A549 (cell line): ENCODE measurements at regions of chr3 and their contacts with region 1.

Region 1: DNA sequence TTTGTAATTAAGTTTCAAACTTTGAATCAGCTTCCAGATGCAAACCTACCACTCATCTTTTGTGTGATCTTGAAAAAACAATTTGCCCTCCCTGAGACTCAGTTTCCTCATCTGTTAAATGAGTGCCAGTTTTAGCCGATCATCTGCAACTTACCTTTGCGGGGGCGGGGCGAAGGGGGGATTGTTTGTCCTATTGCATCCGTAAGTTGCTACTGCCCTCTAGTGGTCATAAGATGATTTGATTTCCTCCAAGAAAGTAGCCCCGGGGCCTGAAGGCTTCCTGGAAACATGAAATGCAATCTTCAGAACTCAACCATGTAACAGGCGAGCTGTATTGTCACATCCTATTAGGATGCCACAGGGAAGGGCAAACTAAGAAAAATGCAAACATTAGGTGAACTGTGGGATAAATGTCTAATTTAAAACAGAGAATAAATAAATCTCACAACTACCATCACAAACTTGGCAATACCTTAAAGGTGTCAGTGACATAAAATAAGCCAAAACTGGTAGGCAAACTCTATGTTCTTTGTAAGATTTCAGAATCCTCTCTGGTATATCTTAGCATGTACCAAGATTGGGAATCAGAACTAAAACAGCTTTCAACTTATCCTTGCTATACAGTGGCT is 63.5 kb upstream of the CLDN18 start:
- DNase-seq: peak; percentile 33 to 70
- ATAC-seq: peak; percentile 64 to 77; a peak in 5 of 6 replicates
- H3K4me3 ChIP-seq: no peak overlapping the region
- H3K27ac ChIP-seq: no peak overlapping the region
- H3K4me1 ChIP-seq: no peaks in the 10 kb centered on the region
- CTCF ChIP-seq: peak; percentile 69
- EP300 ChIP-seq: no peak
- POLR2A ChIP-seq: no peak
- RAD21 ChIP-seq: peak; percentile 74 to 79

Region 2: GRCh38 chr3:137032465-137033120 is 913.9 kb before region 1 on chr3:
- CTCF ChIA-PET with region 1: interaction called, 10 read pairs
- POLR2A ChIA-PET with region 1: no interaction called
- DNase-seq: peak; percentile 68 to 76
- ATAC-seq: peak; percentile 91 to 95
- H3K4me3 ChIP-seq: peak overlapping the region; percentile 3; the same call in 2 of the 3 replicates
- H3K27ac ChIP-seq: no peak overlapping the region
- H3K4me1 ChIP-seq: no peaks in the 10 kb centered on the region
- CTCF ChIP-seq: peak; percentile 68
- EP300 ChIP-seq: no peak
- POLR2A ChIP-seq: no peak
- RAD21 ChIP-seq: peak; percentile 68 to 71

Region 3: DNA sequence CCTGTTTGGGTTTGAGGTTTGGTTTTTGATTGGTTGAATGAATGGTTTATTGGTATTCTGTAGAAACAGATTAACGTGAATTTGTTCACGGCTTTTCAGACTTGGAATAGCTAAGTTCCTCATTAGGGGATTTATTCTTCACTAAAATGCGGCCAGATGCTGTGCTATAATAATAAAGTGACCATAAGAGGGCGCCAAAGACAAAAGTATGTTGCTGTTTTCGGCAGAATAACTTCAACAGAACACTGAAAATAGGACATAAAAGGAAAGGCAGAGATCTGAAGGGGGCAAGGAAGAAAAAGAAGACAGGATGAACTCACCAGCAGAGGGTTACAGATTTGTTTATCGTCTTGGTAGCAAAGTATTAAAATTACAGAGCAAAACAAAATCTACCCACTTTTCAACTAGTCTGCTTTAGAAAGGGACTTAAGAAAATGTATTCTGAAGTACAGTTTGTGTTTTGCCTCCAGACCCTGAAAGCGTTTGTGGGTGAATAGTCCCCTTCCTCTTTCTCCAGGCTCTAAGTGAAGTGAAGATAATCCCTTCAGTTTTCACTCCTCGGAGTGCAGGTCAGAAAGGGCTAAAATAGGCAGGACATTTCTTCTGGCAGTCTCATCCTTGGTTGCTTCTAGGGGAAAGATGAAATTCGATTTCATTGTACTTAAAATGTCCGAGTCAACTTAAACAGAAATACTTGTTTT is 841.0 kb before region 1 on chr3:
- CTCF ChIA-PET with region 1: interaction called, 14 read pairs
- POLR2A ChIA-PET with region 1: no interaction called
- DNase-seq: peak; percentile 29 to 43
- ATAC-seq: peak; percentile 72 to 88; a peak in 4 of 6 replicates
- H3K4me3 ChIP-seq: no peak overlapping the region
- H3K27ac ChIP-seq: no peak overlapping the region
- H3K4me1 ChIP-seq: no peaks in the 10 kb centered on the region
- CTCF ChIP-seq: peak; percentile 70
- EP300 ChIP-seq: no peak
- POLR2A ChIP-seq: no peak
- RAD21 ChIP-seq: peak; percentile 67 to 72

Region 4: DNA sequence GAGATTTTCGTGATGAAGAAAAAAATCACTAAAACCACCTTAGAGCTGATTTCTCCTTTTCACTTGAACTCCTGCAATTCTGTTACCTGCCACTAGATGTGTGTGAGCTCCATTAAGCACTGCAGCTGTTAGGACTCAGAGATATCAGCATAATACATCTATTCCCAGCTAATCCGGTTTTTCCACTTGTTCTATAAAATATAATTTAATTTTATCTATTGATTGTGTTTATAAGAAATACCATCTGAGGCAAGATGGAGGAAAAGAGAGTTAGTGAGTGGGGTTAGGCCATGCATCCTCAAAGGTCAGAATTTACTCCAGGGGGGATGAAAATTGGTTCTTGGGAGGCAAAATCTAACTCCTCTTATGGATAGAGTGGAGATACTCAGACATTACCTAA is 836.0 kb before region 1 on chr3:
- CTCF ChIA-PET with region 1: interaction called, 14 read pairs
- POLR2A ChIA-PET with region 1: no interaction called
- DNase-seq: peak; percentile 11 to 21
- ATAC-seq: peak; percentile 71 to 84; a peak in 4 of 6 replicates
- H3K4me3 ChIP-seq: no peak overlapping the region
- H3K27ac ChIP-seq: no peak overlapping the region
- H3K4me1 ChIP-seq: no peaks in the 10 kb centered on the region
- CTCF ChIP-seq: peak; percentile 37
- EP300 ChIP-seq: no peak
- POLR2A ChIP-seq: no peak
- RAD21 ChIP-seq: peak in 1 of 2 experiments; percentile 41; a peak in 3 of 5 replicates

Region 5: GRCh38 chr3:137761197-137762127 is 185.0 kb before region 1 on chr3:
- CTCF ChIA-PET with region 1: no interaction called
- POLR2A ChIA-PET with region 1: no interaction called
- DNase-seq: no peak
- ATAC-seq: no peak
- H3K4me3 ChIP-seq: no peak overlapping the region
- H3K27ac ChIP-seq: no peak overlapping the region
- H3K4me1 ChIP-seq: 0 out of 3 replicates have a peak, but pooled peaks cover 5% of the 10 kb centered on the region
- CTCF ChIP-seq: no peak
- EP300 ChIP-seq: no peak
- POLR2A ChIP-seq: no peak
- RAD21 ChIP-seq: no peak